PC-9 (cell line): ENCODE measurements at regions of chr9 and their contacts with region 1.

Region 1: GRCh38 chr9:125746017-125746773 is 978 bp upstream of the PBX3 start:
- DNase-seq: peak; percentile 82 to 97
- H3K4me3 ChIP-seq: peak overlapping the region; percentile 56
- H3K27ac ChIP-seq: no peak overlapping the region
- H3K4me1 ChIP-seq: peaks cover 10% of the 10 kb centered on the region; the same call in 1 of the 2 replicates
- H3K27me3 ChIP-seq: no peaks in the 10 kb centered on the region
- CTCF ChIP-seq: no peak

Region 2: DNA sequence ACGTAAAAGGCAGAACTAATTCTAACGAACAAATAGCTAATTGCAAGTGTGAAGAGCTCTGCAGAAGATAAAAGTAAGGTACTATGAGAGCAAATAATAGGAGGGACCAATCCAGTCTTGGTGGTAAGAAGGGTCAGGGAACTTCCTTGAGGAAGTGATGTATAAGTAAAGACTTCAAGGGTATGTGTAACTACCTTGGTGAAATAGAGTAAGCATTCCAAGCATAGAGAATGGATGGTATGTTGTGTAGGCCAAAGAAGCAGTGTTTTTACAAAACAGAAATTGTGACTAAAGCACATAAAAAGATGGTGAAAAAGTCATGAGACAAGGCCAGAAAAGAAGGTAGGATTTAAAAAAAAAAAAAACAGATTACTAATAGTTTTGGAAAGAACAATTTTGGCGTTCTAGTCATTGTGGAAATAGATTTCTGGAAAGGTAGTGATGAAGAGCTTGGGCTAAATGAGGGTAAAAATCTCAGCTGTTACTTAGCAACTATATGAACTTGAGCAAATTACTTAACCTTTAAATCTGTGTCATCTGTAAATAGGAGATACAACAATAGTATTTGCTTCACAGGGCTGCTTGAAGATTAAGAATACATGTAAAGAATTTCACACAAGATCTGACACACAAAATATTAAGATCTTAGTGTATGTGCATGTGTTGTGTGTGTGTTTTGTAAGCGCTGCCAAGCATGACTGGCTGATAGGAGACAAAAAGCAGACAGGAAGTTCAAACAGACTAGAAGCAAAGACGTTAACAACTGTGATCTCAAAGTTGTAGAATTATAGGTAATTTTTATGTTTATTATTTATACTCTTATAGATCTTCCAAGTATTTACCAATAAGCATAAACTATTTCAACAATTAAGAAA is 1048.6 kb before region 1 on chr9:
- CTCF ChIA-PET with region 1: no interaction called
- POLR2A ChIA-PET with region 1: interaction called, 15 read pairs
- intact Hi-C with region 1: no loop called
- DNase-seq: peak in 1 of 2 experiments; percentile 81
- H3K4me3 ChIP-seq: no peak overlapping the region
- H3K27ac ChIP-seq: peak overlapping the region; percentile 81
- H3K4me1 ChIP-seq: peaks cover 58% of the 10 kb centered on the region
- H3K27me3 ChIP-seq: no peaks in the 10 kb centered on the region
- CTCF ChIP-seq: no peak

Region 3: DNA sequence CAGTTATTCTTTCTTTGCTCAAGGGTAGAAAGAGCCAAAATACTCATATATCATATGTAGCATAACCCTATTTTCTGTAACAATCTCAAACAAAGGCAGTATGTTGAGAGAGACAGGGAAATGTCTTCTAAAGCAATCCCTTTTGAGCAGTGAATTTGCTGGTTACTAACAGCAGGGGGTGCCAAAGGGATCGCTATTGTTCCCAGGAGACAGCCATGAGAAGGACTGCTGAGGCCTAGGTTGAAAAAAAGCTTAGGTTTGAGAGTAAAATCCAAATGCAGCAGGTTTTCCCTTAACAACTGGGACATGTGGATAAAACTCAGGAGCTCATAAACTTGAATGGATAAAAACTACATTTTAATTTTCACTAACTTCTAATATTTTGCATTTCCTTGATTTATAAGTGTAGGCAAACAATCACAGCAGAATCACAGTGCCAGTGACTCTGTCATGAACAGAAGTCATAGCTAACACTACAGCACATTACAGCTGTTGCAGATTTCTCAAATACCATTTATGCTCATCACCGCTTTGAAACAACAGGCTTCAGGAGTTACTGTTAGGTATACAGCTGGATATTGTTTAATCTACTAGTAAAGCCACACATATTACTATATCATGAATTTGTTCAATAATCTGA is 187.6 kb before region 1 on chr9:
- CTCF ChIA-PET with region 1: no interaction called
- POLR2A ChIA-PET with region 1: no interaction called
- intact Hi-C with region 1: loop called (anchors 2 kb)
- DNase-seq: peak; percentile 56 to 57
- H3K4me3 ChIP-seq: no peak overlapping the region
- H3K27ac ChIP-seq: no peak overlapping the region
- H3K4me1 ChIP-seq: no peaks in the 10 kb centered on the region
- H3K27me3 ChIP-seq: no peaks in the 10 kb centered on the region
- CTCF ChIP-seq: peak; percentile 84

Region 4: GRCh38 chr9:126146254-126147145 is 400.3 kb after region 1 on chr9:
- CTCF ChIA-PET with region 1: no interaction called
- POLR2A ChIA-PET with region 1: interaction called, 11 read pairs
- intact Hi-C with region 1: no loop called
- DNase-seq: peak in 1 of 2 experiments; percentile 15
- H3K4me3 ChIP-seq: no peak overlapping the region
- H3K27ac ChIP-seq: no peak overlapping the region
- H3K4me1 ChIP-seq: no peaks in the 10 kb centered on the region
- H3K27me3 ChIP-seq: peaks cover 95% of the 10 kb centered on the region
- CTCF ChIP-seq: peak; percentile 56; the same call in 1 of the 2 replicates